Activated CD8-positive, alpha-beta T cell treated with anti-CD3 and anti-CD28 coated beads, Interleukin-2, amount 10 ng/mL, durations not matched to agents 7 days and 5 days (primary cell): ENCODE measurements at regions of chr6 and their contacts with region 1.

Region 1: GRCh38 chr6:166381733-166382499 is 824 bp downstream of the MPC1 start:
- DNase-seq: peak; percentile 82
- ATAC-seq: peak; percentile 43
- H3K4me3 Mint-ChIP-seq: peak overlapping the region; percentile 94
- H3K27ac Mint-ChIP-seq: peak overlapping the region; percentile 86
- H3K4me1 Mint-ChIP-seq: peaks cover 16% of the 10 kb centered on the region
- H3K27me3 Mint-ChIP-seq: no peaks in the 10 kb centered on the region

Region 2: DNA sequence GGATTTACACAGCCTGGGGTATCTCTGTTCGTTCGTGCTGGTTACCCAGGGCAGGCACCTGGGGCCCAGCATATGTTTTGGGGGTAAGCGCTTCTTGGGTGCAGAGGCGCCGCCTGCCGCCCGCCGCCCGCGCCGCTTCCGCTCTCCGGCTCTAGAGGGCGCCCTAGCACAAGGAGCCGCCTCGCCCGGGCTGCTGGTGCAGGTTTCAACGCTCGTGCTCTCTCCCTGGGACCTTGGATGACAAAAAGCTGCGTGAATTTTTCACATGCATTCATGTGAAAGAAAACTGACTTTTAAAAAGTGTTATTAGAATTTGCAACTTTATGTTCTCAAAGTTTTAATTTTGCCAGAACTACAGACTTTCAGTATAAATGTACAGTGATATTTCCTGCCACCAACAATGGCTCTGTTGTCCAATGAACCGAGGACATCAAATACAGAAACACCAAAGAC is 106.2 kb before region 1 on chr6:
- CTCF ChIA-PET with region 1: interaction called, 49 read pairs
- POLR2A ChIA-PET with region 1: interaction called, 3 read pairs
- DNase-seq: peak; percentile 83
- ATAC-seq: peak; percentile 93
- H3K4me3 Mint-ChIP-seq: no peak overlapping the region
- H3K27ac Mint-ChIP-seq: peak overlapping the region; percentile 64
- H3K4me1 Mint-ChIP-seq: peaks cover 11% of the 10 kb centered on the region
- H3K27me3 Mint-ChIP-seq: peaks cover 14% of the 10 kb centered on the region

Region 3: GRCh38 chr6:166293731-166294584 is 88.0 kb before region 1 on chr6:
- CTCF ChIA-PET with region 1: interaction called, 11 read pairs
- POLR2A ChIA-PET with region 1: no interaction called
- DNase-seq: no peak
- ATAC-seq: no peak
- H3K4me3 Mint-ChIP-seq: no peak overlapping the region
- H3K27ac Mint-ChIP-seq: no peak overlapping the region
- H3K4me1 Mint-ChIP-seq: no peaks in the 10 kb centered on the region
- H3K27me3 Mint-ChIP-seq: peaks cover 46% of the 10 kb centered on the region

Region 4: DNA sequence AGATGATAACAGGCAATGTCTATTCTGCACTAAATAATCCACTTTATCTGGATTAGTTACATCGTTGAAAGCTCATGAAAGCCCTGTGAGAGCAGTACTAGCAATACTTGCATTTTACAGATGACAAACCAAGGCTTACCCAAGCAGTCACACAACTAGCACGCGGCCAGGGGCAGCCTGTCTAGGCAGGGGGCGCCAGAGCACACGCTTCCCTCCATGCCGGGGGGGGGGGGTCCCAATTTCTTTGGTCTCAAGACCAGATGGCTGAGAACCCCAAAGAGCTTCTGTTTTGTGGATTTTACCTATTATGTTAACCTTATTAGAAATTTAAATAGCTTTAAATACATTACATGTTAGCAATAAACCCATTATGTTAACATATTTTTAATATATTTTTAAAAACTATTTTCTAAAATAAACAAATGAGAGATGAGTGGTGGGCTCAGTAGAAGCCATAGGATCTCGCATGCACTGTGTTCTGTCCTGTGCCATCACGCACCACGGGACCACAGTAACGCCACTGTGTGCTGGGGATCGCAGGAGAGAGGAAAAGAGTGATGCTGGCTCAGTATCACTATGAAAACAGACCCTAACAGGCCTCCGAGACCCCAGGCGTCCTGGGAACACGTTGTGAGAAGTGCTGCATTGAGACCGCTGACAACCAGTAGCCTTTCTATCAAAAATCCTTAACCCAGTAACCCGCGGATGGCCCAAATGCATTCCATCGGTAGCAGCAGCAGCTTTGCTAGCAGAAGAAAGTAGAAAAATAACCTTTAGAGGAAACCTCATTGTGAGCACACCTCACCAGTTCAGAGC is 68.5 kb before region 1 on chr6:
- CTCF ChIA-PET with region 1: interaction called, 55 read pairs
- POLR2A ChIA-PET with region 1: no interaction called
- DNase-seq: peak; percentile 67
- ATAC-seq: peak; percentile 96
- H3K4me3 Mint-ChIP-seq: no peak overlapping the region
- H3K27ac Mint-ChIP-seq: no peak overlapping the region
- H3K4me1 Mint-ChIP-seq: peaks cover 1% of the 10 kb centered on the region
- H3K27me3 Mint-ChIP-seq: peaks cover 33% of the 10 kb centered on the region

Region 5: DNA sequence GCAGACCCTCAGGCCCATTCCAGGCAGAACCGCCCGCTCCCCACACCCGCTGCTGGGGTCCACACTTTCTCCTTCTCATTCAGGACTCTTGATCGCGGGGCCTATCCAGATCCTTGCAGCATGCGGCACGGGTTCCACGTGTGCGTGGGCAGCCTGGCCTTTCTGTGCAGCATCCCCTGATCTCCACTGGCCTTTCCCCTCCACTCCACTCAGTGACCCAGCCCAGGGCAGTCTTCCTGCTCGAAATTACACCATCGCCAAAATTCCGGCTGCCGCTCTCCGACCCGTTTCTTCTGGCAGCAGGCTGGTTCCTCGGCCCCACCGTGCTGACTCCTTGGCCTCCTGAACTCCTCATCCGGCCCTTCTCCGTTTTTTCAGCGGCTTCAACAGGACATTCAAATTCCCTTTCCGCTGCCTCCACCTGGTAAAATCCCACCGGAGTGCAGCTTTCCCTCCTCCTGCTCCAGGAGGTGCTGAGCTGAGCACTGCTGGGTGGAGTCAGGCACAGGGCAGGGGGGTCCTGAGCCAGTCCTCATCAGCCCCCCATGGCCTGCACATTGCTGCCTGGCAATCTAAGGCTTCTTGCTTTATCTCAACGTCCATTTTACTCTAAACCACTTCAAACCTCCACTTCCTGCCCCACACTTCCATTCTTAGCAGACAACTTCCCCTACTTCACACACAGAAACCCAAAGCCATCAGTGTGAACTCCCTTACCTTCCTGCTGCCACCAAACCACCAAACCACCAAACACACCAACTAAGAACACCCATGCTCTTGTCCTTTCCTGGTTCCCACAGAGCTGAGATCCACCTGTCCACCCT is 48.5 kb before region 1 on chr6:
- CTCF ChIA-PET with region 1: interaction called, 32 read pairs
- POLR2A ChIA-PET with region 1: interaction called, 3 read pairs
- DNase-seq: peak; percentile 75
- ATAC-seq: peak; percentile 92
- H3K4me3 Mint-ChIP-seq: peak overlapping the region; percentile 60
- H3K27ac Mint-ChIP-seq: peak overlapping the region; percentile 60
- H3K4me1 Mint-ChIP-seq: peaks cover 50% of the 10 kb centered on the region
- H3K27me3 Mint-ChIP-seq: peaks cover 7% of the 10 kb centered on the region

Region 6: DNA sequence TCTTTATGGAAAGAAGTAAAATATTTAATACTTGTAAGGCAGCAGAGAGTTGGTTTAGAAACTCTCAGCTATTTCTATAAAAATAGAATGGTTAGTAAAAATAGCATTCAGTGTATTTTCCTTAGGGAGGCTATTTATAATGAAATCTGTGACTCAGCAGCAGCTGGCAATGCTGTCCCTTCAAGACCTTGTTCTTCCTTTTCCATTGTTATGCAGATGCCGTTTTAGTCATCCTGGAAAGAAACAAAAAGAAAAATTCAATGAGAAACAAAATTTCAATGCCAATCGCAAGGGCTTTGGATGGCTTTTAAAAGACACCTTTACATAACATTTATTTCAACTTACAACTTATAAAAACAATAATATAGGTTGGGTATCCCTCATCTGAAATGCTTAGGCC is 16.7 kb before region 1 on chr6:
- CTCF ChIA-PET with region 1: interaction called, 11 read pairs
- POLR2A ChIA-PET with region 1: no interaction called
- DNase-seq: no peak
- ATAC-seq: no peak
- H3K4me3 Mint-ChIP-seq: no peak overlapping the region
- H3K27ac Mint-ChIP-seq: no peak overlapping the region
- H3K4me1 Mint-ChIP-seq: no peaks in the 10 kb centered on the region
- H3K27me3 Mint-ChIP-seq: no peaks in the 10 kb centered on the region